IMR-90 (cell line): ENCODE measurements at regions of chr7 and their contacts with region 1.

Region 1: DNA sequence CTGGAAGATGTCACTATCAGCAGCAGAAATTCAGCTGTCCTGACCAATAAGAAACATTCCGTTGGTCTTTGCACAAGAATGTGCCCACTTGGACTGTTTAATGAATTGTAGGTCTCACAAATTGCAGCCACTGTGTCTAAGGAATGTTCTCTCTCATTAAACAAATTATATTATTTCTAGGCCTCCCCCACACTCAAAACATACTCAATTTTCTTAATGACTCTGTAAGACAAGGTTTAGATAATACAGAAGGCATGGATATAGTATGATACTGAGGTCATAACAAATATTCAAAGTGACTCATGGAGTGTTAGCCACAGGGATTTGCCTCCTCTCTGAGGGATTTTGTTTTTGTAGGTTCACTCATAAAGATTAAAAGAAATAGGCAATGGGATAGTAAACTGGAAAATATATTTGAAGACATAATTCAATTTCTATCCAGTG is 197.5 kb downstream of the PTN start:
- DNase-seq: peak; percentile 95
- ATAC-seq: peak; percentile 86
- H3K4me3 ChIP-seq: no peak overlapping the region
- H3K27ac ChIP-seq: no peak overlapping the region
- H3K4me1 ChIP-seq: peaks cover 23% of the 10 kb centered on the region
- H3K27me3 ChIP-seq: no peaks in the 10 kb centered on the region
- CTCF ChIP-seq: no peak
- POLR2A ChIP-seq: no peak
- RAD21 ChIP-seq: peak; percentile 26; the same call in 1 of the 2 replicates

Region 2: DNA sequence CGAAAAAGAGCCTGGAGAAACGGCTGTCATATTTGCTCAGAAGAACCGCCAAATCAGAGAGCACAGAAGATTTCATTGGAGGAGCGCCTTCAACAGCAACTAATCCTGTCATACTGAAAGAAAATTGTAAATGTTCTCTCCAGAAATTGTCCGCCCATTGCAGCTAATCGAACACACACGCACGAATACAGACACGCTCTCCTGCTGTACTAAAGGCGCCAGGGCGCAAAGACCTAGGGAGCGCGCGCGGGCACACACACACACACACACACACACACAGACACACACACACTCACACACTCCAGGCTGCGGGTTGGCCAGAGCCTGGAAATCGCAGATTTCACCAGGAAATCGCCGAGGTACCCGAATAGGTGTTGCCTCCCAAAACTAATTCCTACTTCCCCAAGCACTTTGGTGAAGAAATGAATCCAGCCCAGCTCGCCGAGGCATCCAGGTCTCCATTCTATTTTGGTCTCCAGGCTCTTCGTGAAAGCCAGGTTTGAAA is 277.5 kb before region 1 on chr7 and contains the start of gene CHRM2:
- CTCF ChIA-PET with region 1: no interaction called
- POLR2A ChIA-PET with region 1: no interaction called
- dilution Hi-C with region 1: no loop called
- in situ Hi-C with region 1: loop called (anchors 10 kb)
- intact Hi-C with region 1: loop called (anchors 5 kb)
- DNase-seq: peak; percentile 90
- ATAC-seq: peak; percentile 56
- H3K4me3 ChIP-seq: peak within 1 kb of the TSS; percentile 95
- H3K27ac ChIP-seq: peak within 1 kb of the TSS; percentile 88
- H3K4me1 ChIP-seq: peaks cover 10% of the 10 kb centered on the region
- H3K27me3 ChIP-seq: no peaks in the 10 kb centered on the region
- CTCF ChIP-seq: no peak
- POLR2A ChIP-seq: no peak
- RAD21 ChIP-seq: no peak
- total RNA-seq, gene CHRM2: 144 and 184 TPM in 2 replicates

Region 3: GRCh38 chr7:136964347-136964746 is 181.7 kb before region 1 on chr7:
- CTCF ChIA-PET with region 1: no interaction called
- POLR2A ChIA-PET with region 1: no interaction called
- dilution Hi-C with region 1: no loop called
- in situ Hi-C with region 1: no loop called
- intact Hi-C with region 1: loop called (anchors 5 kb)
- DNase-seq: no peak
- ATAC-seq: no peak; the same call in 1 of the 2 replicates
- H3K4me3 ChIP-seq: no peak overlapping the region
- H3K27ac ChIP-seq: peak overlapping the region; percentile 74; the same call in 1 of the 2 replicates
- H3K4me1 ChIP-seq: peaks cover 13% of the 10 kb centered on the region
- H3K27me3 ChIP-seq: no peaks in the 10 kb centered on the region
- CTCF ChIP-seq: no peak
- POLR2A ChIP-seq: no peak
- RAD21 ChIP-seq: no peak

Region 4: DNA sequence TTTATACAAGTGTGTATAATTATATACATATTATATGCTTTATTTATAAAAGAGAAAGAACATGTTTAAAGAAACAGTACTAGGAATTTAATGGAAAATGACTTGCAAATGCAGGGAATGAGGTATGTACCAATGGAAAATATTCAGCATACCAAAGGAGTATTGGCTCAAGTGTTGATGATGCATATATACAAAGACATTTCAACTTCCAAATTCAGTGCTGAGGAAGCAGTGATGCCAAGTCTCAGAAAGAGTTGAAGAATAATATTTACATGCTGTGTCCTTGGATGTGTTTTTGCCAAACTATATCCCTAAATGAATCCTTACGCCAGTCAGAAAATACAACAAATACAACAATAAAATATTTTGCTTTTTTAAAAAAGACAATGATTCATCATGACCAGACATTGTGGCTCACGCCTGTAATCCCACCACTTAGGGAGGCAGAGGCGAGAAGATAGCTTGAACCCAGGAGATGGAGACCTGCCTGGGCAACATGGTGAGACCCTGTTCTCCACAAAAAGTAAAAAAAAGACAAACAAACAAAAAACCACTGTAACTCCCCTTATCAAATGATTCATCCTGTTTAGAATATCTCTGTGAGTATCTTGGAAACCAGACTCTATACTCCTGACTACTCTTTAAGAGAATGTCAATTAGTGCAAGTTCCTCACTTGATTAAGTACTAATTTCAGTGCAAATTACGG is 120.4 kb before region 1 on chr7:
- CTCF ChIA-PET with region 1: no interaction called
- POLR2A ChIA-PET with region 1: interaction called, 15 read pairs
- dilution Hi-C with region 1: no loop called
- in situ Hi-C with region 1: no loop called
- intact Hi-C with region 1: loop called (anchors 2 kb)
- DNase-seq: peak; percentile 93
- ATAC-seq: peak; percentile 67
- H3K4me3 ChIP-seq: no peak overlapping the region
- H3K27ac ChIP-seq: peak overlapping the region; percentile 99
- H3K4me1 ChIP-seq: peaks cover 6% of the 10 kb centered on the region
- H3K27me3 ChIP-seq: no peaks in the 10 kb centered on the region
- CTCF ChIP-seq: no peak
- POLR2A ChIP-seq: no peak
- RAD21 ChIP-seq: no peak; the same call in 1 of the 2 replicates

Region 5: DNA sequence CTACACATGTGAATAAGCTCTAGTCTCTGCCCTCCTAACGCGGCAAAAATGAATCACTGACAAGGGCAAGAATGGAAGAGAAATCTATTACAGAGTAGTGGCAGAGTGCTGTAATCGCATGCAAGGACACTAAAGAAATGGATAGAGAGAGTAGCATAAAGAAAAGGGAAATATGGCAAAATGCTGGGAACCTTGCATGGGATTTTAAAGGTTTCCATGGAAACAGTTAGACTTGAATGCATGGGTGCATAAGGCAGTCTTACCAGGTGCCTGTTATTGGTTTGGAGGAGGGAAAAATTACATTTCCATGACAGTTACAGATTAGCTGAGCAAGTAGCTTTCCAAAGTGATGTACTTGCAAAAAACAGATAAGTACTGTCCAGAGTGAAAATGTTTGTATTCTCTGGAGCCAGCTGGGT is 35.9 kb before region 1 on chr7:
- CTCF ChIA-PET with region 1: no interaction called
- POLR2A ChIA-PET with region 1: no interaction called
- dilution Hi-C with region 1: no loop called
- in situ Hi-C with region 1: no loop called
- intact Hi-C with region 1: loop called (anchors 5 kb)
- DNase-seq: peak; percentile 68
- ATAC-seq: peak; percentile 81
- H3K4me3 ChIP-seq: peak overlapping the region; percentile 22; the same call in 1 of the 2 replicates
- H3K27ac ChIP-seq: peak overlapping the region; percentile 71; the same call in 1 of the 2 replicates
- H3K4me1 ChIP-seq: peaks cover 4% of the 10 kb centered on the region; the same call in 1 of the 2 replicates
- H3K27me3 ChIP-seq: no peaks in the 10 kb centered on the region
- CTCF ChIP-seq: no peak; the same call in 1 of the 2 replicates
- POLR2A ChIP-seq: no peak
- RAD21 ChIP-seq: no peak